Kidney (tissue), 22 donors: ENCODE measurements at regions of chr1 and their contacts with region 1.

Region 1: DNA sequence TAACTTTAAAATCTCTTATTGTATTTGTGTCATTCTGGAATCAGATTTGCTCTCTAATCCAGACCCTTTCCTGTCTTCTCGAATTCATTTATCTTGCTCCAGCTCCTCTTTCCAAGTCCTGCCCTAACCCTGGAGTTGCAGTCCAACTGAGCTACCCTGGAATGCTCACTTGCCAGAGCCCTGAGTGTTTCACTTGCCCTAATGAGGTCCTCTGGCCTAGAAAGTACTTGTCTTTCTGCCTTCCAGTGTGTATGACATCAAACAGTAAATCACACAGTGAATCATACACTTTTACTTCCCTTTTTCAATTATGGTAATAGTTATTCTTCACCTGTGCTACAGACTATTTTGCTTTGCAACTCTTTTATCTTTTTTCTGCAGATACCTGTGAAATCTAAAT is 96.9 kb downstream of the NEK7 start:
- DNase-seq: no peak
- H3K4me3 ChIP-seq: no peak overlapping the region
- H3K27ac ChIP-seq: no peak overlapping the region
- H3K4me1 ChIP-seq: no peaks in the 10 kb centered on the region
- H3K27me3 ChIP-seq: no peaks in the 10 kb centered on the region
- CTCF ChIP-seq: no peak

Region 2: DNA sequence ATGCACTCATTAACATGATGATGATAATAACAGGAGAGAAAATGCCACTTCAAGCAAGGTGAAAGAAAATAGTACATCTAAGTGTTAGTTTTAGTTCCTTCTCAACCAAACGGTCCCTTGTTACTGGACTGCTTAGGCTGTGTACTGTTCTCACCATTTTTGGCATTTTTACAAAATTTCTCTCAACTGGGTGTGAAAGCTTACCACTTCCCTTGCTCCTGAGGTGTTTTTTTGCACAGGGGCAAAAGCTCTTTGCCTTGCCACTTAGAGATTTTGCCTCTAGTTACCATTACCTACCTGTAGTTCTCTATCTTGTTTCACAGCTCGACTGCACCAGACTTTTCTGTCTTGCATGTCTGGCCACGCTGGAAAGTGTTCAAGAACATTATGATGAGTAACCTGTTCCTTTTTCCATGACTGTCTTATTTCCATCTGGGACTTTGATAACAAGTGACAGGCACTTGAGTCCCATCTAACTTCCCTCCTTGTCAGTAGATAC is 86.2 kb before region 1 on chr1:
- intact Hi-C with region 1: loop called (anchors 10 kb)
- DNase-seq: no peak
- H3K4me3 ChIP-seq: no peak overlapping the region
- H3K27ac ChIP-seq: no peak overlapping the region
- H3K4me1 ChIP-seq: peaks cover 0 to 36% (median 23%) of the 10 kb centered on the region in 3 donors
- H3K27me3 ChIP-seq: no peaks in the 10 kb centered on the region
- CTCF ChIP-seq: no peak